Naive thymus-derived CD8-positive, alpha-beta T cell (primary cell): ENCODE measurements at regions of chr2 and their contacts with region 1.

Region 1: DNA sequence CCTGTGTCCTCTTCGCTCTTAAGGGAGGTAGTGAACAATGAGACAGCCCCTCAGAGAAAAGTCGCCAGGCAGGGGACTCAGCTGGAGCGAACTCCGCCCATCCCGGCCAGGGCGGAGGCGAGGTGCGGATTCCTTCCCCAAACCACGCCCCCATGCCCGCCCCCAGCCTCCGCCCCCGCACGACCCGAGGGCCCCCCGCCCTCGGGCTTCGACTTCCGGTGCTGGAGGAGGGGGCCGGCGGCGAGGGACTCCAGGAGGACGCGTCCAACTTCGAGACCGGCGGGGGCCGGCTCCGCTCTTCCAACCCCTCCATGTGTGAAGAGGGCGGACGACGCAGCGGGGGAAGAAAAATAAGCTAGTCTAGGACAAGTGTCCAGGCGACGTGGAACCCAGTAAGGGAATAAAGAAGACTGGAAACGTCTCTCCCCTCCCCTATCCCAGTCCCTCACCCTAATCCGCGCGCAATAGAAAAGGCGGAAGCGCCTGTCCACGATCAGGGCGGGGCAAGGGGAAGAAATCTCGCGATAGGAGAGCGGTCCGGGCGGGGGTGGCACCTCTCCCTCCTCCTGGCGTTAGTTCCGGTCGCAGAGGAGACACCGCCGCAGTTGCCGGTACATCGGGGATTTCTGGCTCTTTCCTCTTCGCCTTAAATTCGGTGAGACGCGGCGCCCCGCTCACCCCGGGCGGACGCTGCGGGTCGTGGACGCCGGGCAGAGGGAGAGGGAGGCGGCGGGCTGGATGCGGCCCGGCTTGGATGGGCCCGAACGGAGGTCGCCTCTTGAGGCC is at the start of gene BZW1:
- DNase-seq: peak; percentile 95 to 99 (median 98)
- ATAC-seq: peak; percentile 78 to 85
- H3K4me3 Mint-ChIP-seq: peak within 1 kb of the TSS; percentile 95 to 99 (median 98)
- H3K27ac Mint-ChIP-seq: peak within 1 kb of the TSS; percentile 94 to 99 (median 99)
- H3K4me1 Mint-ChIP-seq: peaks cover 26 to 52% (median 46%) of the 10 kb centered on the region in 4 donors
- H3K27me3 Mint-ChIP-seq: no peaks in the 10 kb centered on the region
- polyA plus RNA-seq, gene BZW1: 222 to 285 (median 243) TPM

Region 2: DNA sequence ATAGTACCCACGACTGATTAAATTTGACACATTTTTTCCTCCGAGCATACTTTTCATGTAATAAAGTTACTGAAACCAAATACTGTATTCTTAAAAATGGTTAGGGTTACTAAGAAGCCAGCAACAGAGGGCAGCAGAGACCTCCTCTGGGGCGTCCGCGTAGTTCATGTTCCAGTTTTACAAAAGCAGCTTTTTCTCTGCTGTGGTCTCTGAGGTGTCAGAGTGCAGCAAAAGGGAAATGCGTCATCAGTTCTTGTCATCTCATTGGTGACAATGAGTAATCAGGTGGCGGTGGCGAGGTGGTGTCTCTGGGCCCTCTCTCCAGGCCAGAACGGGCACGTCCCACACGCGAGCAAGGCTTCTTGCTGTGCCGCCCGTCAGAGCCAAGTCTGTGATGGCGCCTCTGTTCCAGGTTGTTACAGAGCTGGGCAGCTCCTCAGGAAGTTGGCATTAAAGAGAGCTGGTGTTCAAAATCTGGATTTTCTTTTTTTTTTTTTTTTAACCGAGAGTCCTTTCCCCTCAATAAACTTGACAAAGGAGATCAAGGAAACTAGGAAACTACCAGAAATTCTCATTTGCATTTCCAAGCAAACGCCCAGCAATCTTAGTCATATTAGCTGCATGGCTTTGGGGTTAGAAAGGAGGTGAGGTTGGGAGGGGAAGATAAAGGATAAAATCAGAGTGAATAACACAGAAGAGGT is 98.4 kb before region 1 on chr2:
- POLR2A ChIA-PET with region 1: interaction called, 19 read pairs
- DNase-seq: peak; percentile 74 to 97 (median 90)
- ATAC-seq: peak; percentile 98 to 99
- H3K4me3 Mint-ChIP-seq: peak overlapping the region; percentile 75 to 90 (median 84)
- H3K27ac Mint-ChIP-seq: peak overlapping the region; percentile 98 to 100 (median 99)
- H3K4me1 Mint-ChIP-seq: peaks cover 2 to 18% (median 10%) of the 10 kb centered on the region in 4 donors
- H3K27me3 Mint-ChIP-seq: peaks cover 0 to 1% (median 0%) of the 10 kb centered on the region in 5 donors

Region 3: DNA sequence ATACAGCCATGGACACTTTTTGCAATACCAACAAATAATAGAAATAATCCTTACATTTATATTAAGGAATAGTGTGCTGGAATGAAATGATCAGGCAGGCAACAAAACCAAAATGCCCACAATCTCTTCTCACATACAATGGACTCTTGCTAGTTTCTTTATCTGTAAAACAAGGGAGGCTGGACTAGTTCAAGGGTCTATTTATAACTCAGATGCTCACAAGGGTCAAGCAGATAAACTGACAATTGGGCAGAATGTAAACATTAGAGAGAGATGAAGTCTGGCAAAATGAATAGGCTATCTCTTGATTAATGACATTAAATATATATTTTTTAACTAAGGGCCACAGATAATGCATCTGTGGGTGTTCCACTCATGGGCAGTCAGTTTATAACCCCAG is 65.9 kb after region 1 on chr2:
- POLR2A ChIA-PET with region 1: no interaction called
- DNase-seq: no peak
- ATAC-seq: no peak
- H3K4me3 Mint-ChIP-seq: no peak overlapping the region
- H3K27ac Mint-ChIP-seq: no peak overlapping the region
- H3K4me1 Mint-ChIP-seq: peaks cover 0 to 6% (median 4%) of the 10 kb centered on the region in 4 donors
- H3K27me3 Mint-ChIP-seq: no peaks in the 10 kb centered on the region